A673 (cell line): ENCODE measurements at regions of chr11 and their contacts with region 1.

Region 1: GRCh38 chr11:83285771-83286528 is at the start of gene CCDC90B:
- DNase-seq: peak; percentile 100
- H3K4me3 ChIP-seq: peak within 1 kb of the TSS; percentile 71
- H3K27ac ChIP-seq: peak within 1 kb of the TSS; percentile 94
- H3K4me1 ChIP-seq: peaks cover 33% of the 10 kb centered on the region
- H3K27me3 ChIP-seq: no peaks in the 10 kb centered on the region
- CTCF ChIP-seq: peak; percentile 74; the same call in 1 of the 2 replicates
- total RNA-seq, gene CCDC90B: 51.2 and 51.6 TPM in 2 replicates

Region 2: GRCh38 chr11:83480251-83480650 is 194.3 kb after region 1 on chr11:
- CTCF ChIA-PET with region 1: no interaction called
- POLR2A ChIA-PET with region 1: no interaction called
- intact Hi-C with region 1: loop called (anchors 5 kb)
- DNase-seq: peak; percentile 76
- H3K4me3 ChIP-seq: peak overlapping the region; percentile 35
- H3K27ac ChIP-seq: peak overlapping the region; percentile 58
- H3K4me1 ChIP-seq: peaks cover 53% of the 10 kb centered on the region
- H3K27me3 ChIP-seq: no peaks in the 10 kb centered on the region
- CTCF ChIP-seq: no peak

Region 3: GRCh38 chr11:83694191-83694910 is 408.4 kb after region 1 on chr11:
- CTCF ChIA-PET with region 1: no interaction called
- POLR2A ChIA-PET with region 1: interaction called, 10 read pairs
- intact Hi-C with region 1: no loop called
- DNase-seq: peak; percentile 92
- H3K4me3 ChIP-seq: peak overlapping the region; percentile 28
- H3K27ac ChIP-seq: peak overlapping the region; percentile 87
- H3K4me1 ChIP-seq: peaks cover 77% of the 10 kb centered on the region
- H3K27me3 ChIP-seq: no peaks in the 10 kb centered on the region
- CTCF ChIP-seq: no peak